ENCODE measurements at regions of chr1 and their contacts with region 1.

Region 1: DNA sequence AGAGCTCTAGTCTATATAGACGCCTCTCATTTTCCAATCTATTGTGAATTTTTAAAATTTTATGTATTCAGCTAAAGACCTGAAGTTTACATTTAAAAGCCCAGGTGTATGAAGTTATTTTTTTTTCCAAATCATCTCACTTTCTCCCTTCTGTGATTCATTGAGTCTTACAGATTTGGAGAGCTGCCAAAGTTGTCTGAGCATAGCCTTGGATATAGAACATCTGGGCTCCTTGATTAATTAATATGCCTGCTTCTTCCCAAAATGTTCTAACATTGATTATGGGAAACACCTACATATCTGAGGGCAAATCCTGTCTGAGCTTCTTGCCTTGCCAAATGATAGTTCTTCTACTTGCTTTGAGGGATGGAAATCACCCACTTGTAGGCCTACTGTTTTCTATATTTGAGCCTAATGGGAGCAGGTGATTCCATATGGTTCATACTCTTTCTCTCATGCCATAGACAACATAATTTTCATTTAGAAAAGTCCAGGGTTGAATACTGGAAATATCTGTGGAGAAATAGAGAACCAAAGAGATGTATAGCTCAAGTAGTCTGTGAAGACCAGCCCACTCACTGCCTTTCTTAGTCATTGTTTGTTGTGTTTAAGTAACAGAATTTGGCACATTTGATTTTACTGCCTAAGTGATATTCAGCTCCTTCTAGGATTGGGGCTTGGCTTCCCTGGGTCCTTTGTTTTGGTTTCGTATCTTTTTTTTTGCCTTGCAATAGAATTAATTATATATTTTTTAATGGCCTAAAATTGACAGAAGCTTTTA is 46.2 kb downstream of the MACF1 start:
- DNase-seq: no peak
- ATAC-seq: no peak
- H3K4me3 ChIP-seq: no peak overlapping the region
- H3K27ac ChIP-seq: no peak overlapping the region
- H3K4me1 ChIP-seq: no peaks in the 10 kb centered on the region
- H3K27me3 ChIP-seq: no peaks in the 10 kb centered on the region

Region 2: GRCh38 chr1:39204441-39205081 is 46.1 kb before region 1 on chr1 and contains the start of gene MACF1:
- intact Hi-C with region 1: loop called in 3 of 4 experiments (anchors 5 kb)
- DNase-seq: peak; percentile 76 to 85 (median 81)
- ATAC-seq: peak; percentile 93 to 95
- H3K4me3 ChIP-seq: peak within 1 kb of the TSS; percentile 80
- H3K27ac ChIP-seq: peak within 1 kb of the TSS; percentile 98
- H3K4me1 ChIP-seq: peaks cover 6% of the 10 kb centered on the region
- H3K27me3 ChIP-seq: no peaks in the 10 kb centered on the region
- total RNA-seq, gene MACF1: 294 to 359 (median 326) TPM

Region 3: GRCh38 chr1:39446986-39447567 is 196.4 kb after region 1 on chr1:
- intact Hi-C with region 1: no loop called
- DNase-seq: no peak
- ATAC-seq: no peak
- H3K4me3 ChIP-seq: no peak overlapping the region
- H3K27ac ChIP-seq: no peak overlapping the region
- H3K4me1 ChIP-seq: no peaks in the 10 kb centered on the region
- H3K27me3 ChIP-seq: no peaks in the 10 kb centered on the region

Region 4: GRCh38 chr1:39478126-39478915 is 227.7 kb after region 1 on chr1:
- intact Hi-C with region 1: no loop called
- DNase-seq: no peak
- ATAC-seq: no peak
- H3K4me3 ChIP-seq: no peak overlapping the region
- H3K27ac ChIP-seq: no peak overlapping the region
- H3K4me1 ChIP-seq: no peaks in the 10 kb centered on the region
- H3K27me3 ChIP-seq: no peaks in the 10 kb centered on the region

Region 5: GRCh38 chr1:39876144-39876543 is 625.5 kb after region 1 on chr1:
- intact Hi-C with region 1: no loop called
- DNase-seq: no peak
- ATAC-seq: no peak
- H3K4me3 ChIP-seq: no peak overlapping the region
- H3K27ac ChIP-seq: no peak overlapping the region
- H3K4me1 ChIP-seq: peaks cover 1% of the 10 kb centered on the region
- H3K27me3 ChIP-seq: no peaks in the 10 kb centered on the region

Measured in right cardiac atrium (tissue), 5 donors.